ENCODE measurements at regions of chr1 and their contacts with region 1.

Region 1: DNA sequence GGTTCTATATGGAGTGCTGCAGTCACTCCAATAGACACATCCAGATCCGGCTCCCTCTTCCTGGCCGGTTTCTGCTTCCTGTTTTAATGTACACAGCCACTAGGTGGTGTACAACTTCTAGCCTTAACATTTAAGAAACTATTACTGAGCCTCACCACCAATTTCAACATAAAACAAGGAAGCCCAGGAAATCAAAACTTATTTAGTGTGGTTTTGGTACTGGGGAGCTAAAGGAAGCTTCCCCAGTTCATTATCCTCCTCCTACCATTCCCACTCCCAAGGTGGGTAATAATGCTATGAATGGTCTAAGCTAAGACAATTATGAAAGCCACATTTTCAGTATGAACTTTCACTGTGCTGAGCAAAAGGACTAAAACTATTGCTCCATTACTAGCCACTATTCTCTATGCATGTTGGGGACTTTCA is 25.5 kb upstream of the MTMR11 start:
- DNase-seq: no peak
- H3K4me3 ChIP-seq: no peak overlapping the region
- H3K27ac ChIP-seq: peak overlapping the region; percentile 25 to 72 (median 47)
- H3K4me1 ChIP-seq: peaks cover 7 to 27% (median 19%) of the 10 kb centered on the region in 4 donors
- H3K27me3 ChIP-seq: no peaks in the 10 kb centered on the region
- CTCF ChIP-seq: peak; percentile 80 to 88 (median 84)
- EP300 ChIP-seq: no peak
- POLR2A ChIP-seq: no peak

Region 2: DNA sequence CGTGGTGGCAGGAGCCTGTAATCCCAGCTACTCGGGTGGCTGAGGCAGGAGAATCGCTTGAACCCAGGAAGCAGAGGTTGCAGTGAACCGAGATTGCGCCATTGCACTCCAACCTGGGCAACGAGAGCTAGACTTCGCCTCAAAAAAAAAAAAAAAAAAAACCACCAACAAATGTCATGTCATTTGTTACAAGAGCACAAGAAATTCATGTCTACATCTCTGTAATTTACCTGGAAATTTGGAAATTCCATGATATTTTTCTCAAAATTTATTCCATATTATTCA is 88.9 kb after region 1 on chr1:
- intact Hi-C with region 1: loop called (anchors 2 kb)
- DNase-seq: no peak
- H3K4me3 ChIP-seq: no peak overlapping the region
- H3K27ac ChIP-seq: no peak overlapping the region
- H3K4me1 ChIP-seq: peaks cover 0 to 10% (median 8%) of the 10 kb centered on the region in 4 donors
- H3K27me3 ChIP-seq: no peaks in the 10 kb centered on the region
- CTCF ChIP-seq: no peak
- EP300 ChIP-seq: no peak
- POLR2A ChIP-seq: no peak

Region 3: GRCh38 chr1:150168960-150169601 is 206.9 kb after region 1 on chr1:
- intact Hi-C with region 1: loop called (anchors 5 kb)
- DNase-seq: no peak
- H3K4me3 ChIP-seq: no peak overlapping the region
- H3K27ac ChIP-seq: no peak overlapping the region
- H3K4me1 ChIP-seq: peaks cover 0 to 29% (median 24%) of the 10 kb centered on the region in 4 donors
- H3K27me3 ChIP-seq: no peaks in the 10 kb centered on the region
- CTCF ChIP-seq: peak; percentile 81 to 94 (median 89)
- EP300 ChIP-seq: no peak
- POLR2A ChIP-seq: no peak

Region 4: DNA sequence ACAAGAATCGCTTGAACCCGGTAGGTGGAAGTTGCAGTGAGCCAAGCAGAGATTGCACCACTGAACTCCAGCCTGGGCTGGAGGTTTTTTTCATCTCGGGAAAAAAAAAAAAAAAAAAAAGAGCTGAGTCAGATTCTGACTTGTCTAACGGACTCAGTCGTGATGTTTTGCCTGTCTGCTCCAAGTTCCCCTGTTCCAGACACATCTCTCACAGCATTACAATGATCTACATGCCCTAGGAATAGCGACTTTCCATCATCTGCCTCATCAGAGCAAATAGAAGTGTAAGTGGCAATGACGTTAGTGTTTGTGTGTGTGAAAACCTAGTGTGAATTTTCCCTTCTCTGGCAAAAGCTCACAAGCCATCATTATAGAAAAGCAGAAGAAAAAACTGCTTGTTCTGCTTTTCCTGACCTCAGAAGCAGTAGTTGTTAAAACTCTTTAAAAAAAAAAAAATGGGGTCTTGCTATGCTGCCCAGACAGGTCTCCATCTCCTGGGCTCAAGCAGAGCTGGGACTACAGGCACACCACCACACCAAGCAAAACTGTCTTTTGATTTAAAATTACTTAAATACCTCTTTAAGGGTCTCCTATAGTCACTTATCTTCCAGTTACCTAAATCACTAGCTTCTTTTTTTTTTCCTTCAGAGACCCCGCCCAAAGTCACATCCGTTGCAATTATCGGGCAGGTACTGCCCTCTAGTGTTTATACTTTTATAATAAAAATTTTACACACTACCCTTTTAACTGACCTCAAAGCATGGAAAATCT is 224.8 kb after region 1 on chr1:
- intact Hi-C with region 1: loop called (anchors 5 kb)
- DNase-seq: no peak
- H3K4me3 ChIP-seq: peak overlapping the region in 3 of 4 donors; percentile 2 to 32 (median 17)
- H3K27ac ChIP-seq: peak overlapping the region; percentile 2 to 29 (median 23)
- H3K4me1 ChIP-seq: peaks cover 4 to 11% (median 7%) of the 10 kb centered on the region in 4 donors
- H3K27me3 ChIP-seq: no peaks in the 10 kb centered on the region
- CTCF ChIP-seq: peak; percentile 47 to 54 (median 48)
- EP300 ChIP-seq: no peak
- POLR2A ChIP-seq: no peak

Measured in esophagus muscularis mucosa (tissue), 4 donors.